GM12878 (cell line): ENCODE measurements at regions of chr6 and their contacts with region 1.

Region 1: GRCh38 chr6:150632785-150633485 is 33.2 kb downstream of the PLEKHG1 start:
- DNase-seq: peak; percentile 41
- ATAC-seq: peak; percentile 50
- H3K4me3 ChIP-seq: peak overlapping the region; percentile 71
- H3K27ac ChIP-seq: peak overlapping the region; percentile 69
- H3K4me1 ChIP-seq: peaks cover 24% of the 10 kb centered on the region
- H3K27me3 ChIP-seq: no peaks in the 10 kb centered on the region; a peak in 1 of 4 replicates
- CTCF ChIP-seq: no peak
- EP300 ChIP-seq: peak in 1 of 2 experiments; percentile 68; a peak in 1 of 4 replicates
- POLR2A ChIP-seq: peak; percentile 45; the same call in 1 of the 2 replicates
- RAD21 ChIP-seq: no peak

Region 2: GRCh38 chr6:150417899-150418826 is 214.8 kb before region 1 on chr6:
- CTCF ChIA-PET with region 1: interaction called, 9 read pairs
- POLR2A ChIA-PET with region 1: no interaction called
- RAD21 ChIA-PET with region 1: interaction called, 22 read pairs
- SMC1A ChIA-PET with region 1: interaction called, 9 read pairs
- in situ Hi-C with region 1: no loop called
- intact Hi-C with region 1: loop called (anchors 1 kb)
- DNase-seq: peak; percentile 40
- ATAC-seq: peak; percentile 95
- H3K4me3 ChIP-seq: peak overlapping the region; percentile 57; the same call in 1 of the 2 replicates
- H3K27ac ChIP-seq: no peak overlapping the region
- H3K4me1 ChIP-seq: no peaks in the 10 kb centered on the region
- H3K27me3 ChIP-seq: no peaks in the 10 kb centered on the region; a peak in 1 of 4 replicates
- CTCF ChIP-seq: peak; percentile 77 to 88 (median 80)
- EP300 ChIP-seq: no peak
- POLR2A ChIP-seq: no peak
- RAD21 ChIP-seq: peak; percentile 90

Region 3: DNA sequence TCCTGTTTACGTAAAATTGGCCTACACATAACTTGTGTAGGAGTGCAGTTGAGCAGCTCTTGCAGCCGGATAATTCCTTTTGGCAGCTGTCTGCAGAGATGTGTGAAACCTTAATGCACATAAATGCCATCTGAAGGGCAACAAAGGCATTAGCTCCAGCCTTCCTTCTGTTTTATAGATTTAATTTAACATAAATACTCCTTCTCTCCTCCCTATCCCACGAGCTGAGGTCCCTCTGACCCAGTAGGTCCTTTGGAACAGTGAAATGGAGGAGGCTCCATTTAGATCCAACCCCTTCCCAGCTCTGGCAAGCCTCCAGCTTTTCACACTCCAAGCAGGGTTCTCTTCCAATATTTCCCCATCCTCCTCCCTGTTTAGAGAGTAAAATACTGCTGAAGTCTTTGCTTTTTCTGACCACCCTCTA is 26.8 kb before region 1 on chr6:
- CTCF ChIA-PET with region 1: interaction called, 7 read pairs
- POLR2A ChIA-PET with region 1: interaction called, 3 read pairs
- RAD21 ChIA-PET with region 1: interaction called, 73 read pairs
- SMC1A ChIA-PET with region 1: interaction called, 30 read pairs
- in situ Hi-C with region 1: no loop called
- intact Hi-C with region 1: no loop called
- DNase-seq: no peak
- ATAC-seq: no peak
- H3K4me3 ChIP-seq: no peak overlapping the region
- H3K27ac ChIP-seq: no peak overlapping the region
- H3K4me1 ChIP-seq: no peaks in the 10 kb centered on the region
- H3K27me3 ChIP-seq: peaks cover 0 to 2% of the 10 kb centered on the region in 2 experiments; a peak in 2 of 4 replicates
- CTCF ChIP-seq: no peak
- EP300 ChIP-seq: no peak
- POLR2A ChIP-seq: no peak
- RAD21 ChIP-seq: no peak

Region 4: DNA sequence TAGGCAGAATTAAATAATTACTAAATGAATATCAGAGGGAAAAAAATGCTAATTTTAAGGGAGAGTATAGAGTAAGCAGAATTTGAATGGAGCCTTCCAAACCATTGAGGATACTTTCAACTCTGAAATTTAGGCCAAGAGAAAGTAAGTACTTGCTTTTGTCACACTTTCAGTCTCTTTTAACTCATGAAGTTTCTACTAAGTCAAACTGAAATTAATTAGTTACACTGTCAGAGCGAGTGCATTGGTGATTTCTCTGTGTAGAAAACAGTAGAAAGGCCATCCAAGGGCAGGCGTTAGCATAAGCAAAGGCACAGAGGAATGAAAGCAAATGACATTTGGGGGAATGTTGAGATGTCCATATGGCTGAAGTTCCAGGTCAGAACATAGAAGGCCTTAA is 59.7 kb after region 1 on chr6:
- CTCF ChIA-PET with region 1: interaction called, 10 read pairs
- POLR2A ChIA-PET with region 1: no interaction called
- RAD21 ChIA-PET with region 1: interaction called, 6 read pairs
- SMC1A ChIA-PET with region 1: interaction called, 27 read pairs
- in situ Hi-C with region 1: no loop called
- intact Hi-C with region 1: loop called (anchors 5 kb)
- DNase-seq: peak; percentile 38
- ATAC-seq: peak; percentile 89
- H3K4me3 ChIP-seq: no peak overlapping the region
- H3K27ac ChIP-seq: 0 out of 2 replicates have a peak overlapping the region, but pooled peaks have one; percentile 11
- H3K4me1 ChIP-seq: peaks cover 23% of the 10 kb centered on the region
- H3K27me3 ChIP-seq: no peaks in the 10 kb centered on the region; a peak in 1 of 4 replicates
- CTCF ChIP-seq: no peak
- EP300 ChIP-seq: peak; percentile 27 to 38; a peak in 1 of 4 replicates
- POLR2A ChIP-seq: no peak
- RAD21 ChIP-seq: no peak

Region 5: DNA sequence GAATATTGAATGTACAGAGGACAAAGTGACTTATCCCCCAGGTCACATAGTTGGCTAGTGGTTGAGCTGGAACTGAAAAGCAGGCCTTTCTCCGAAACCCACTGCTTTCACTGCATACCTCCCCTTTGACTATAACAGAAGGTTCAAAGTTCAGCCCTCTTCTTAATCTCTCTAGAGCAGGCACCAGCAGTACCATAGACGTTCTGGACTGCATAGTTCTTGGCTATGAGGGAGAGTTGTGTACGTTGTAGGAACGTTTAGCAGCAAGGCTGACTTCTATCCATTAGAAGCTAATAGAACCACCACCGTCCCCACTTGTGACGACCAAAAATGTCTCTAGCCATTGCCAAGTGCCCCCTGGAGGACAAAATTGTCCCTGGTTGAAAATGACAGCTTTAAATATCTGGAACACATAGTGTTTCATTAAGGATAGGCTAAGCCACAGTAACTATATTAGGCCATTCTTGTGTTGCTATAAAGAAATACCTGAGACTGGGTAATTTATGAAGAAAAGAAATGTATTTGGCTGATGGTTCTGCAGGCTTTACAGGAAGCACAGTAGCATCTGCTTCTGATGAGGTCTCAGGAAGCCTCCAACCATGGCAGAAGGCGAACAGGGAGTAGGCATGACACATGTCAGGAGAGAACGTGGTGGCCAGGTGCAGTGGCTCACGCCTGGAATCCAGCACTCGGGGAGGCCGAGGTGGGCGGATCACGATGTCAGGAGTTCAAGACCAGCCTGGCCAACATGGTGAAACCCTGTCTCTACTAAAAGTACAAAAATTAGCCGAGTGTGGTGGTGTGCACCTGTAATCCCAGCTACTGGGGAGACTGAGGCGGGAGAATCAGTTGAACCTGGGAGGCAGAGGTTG is 108.9 kb after region 1 on chr6:
- CTCF ChIA-PET with region 1: interaction called, 6 read pairs
- POLR2A ChIA-PET with region 1: no interaction called
- RAD21 ChIA-PET with region 1: interaction called, 4 read pairs
- SMC1A ChIA-PET with region 1: interaction called, 15 read pairs
- in situ Hi-C with region 1: no loop called
- intact Hi-C with region 1: no loop called
- DNase-seq: no peak
- ATAC-seq: peak; percentile 88
- H3K4me3 ChIP-seq: no peak overlapping the region
- H3K27ac ChIP-seq: no peak overlapping the region
- H3K4me1 ChIP-seq: no peaks in the 10 kb centered on the region
- H3K27me3 ChIP-seq: no peaks in the 10 kb centered on the region
- CTCF ChIP-seq: peak; percentile 52 to 61 (median 59); a peak in 5 of 6 replicates
- EP300 ChIP-seq: no peak
- POLR2A ChIP-seq: no peak
- RAD21 ChIP-seq: peak; percentile 85